Activated naive CD4-positive, alpha-beta T cell treated with anti-CD3 and anti-CD28 coated beads for 36 hours (primary cell): ENCODE measurements at regions of chr19 and their contacts with region 1.

Region 1: DNA sequence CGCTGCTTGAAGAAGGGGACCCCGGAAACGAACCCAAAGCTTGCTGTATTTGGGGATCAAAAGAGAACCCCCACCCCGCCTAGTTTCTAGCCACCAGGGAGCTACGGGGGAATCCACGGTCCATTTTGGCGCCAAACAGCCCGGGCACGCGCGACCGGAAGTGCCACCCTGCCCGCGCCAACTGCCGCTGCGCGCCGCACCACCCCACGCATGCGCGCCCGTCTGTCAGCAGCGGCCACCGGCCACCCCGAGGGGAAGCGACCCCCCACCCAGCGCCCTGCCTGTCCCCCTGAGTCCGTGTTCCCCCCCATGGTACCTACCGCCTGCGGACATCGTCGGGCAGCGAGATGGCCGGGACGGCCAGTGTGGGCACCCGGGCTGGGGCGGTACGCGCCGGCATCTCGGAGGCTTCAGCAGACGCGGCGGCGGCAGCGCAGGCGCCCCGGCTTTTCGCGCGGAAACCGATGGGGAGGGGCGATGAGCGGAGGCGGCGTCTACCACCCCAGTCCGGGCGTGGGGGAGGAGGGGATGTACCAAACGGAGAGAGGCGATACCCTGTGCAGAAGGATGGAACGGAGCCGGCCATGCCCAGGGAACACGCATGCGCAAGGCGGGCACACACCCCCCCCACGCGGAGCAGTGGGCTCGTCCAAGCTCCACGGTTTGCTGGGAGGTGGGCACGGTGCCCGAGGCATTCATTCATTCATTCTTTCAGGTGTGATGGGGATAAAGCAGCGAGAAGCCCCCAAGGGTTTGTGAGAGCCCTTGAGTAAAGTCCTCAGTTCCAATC is at the start of gene DNMT1:
- DNase-seq: peak; percentile 99
- H3K4me3 Mint-ChIP-seq: peak within 1 kb of the TSS; percentile 99
- H3K27ac Mint-ChIP-seq: peak within 1 kb of the TSS; percentile 98
- H3K4me1 Mint-ChIP-seq: peaks cover 46% of the 10 kb centered on the region
- H3K27me3 Mint-ChIP-seq: no peaks in the 10 kb centered on the region
- total RNA-seq, gene DNMT1: 365 to 371 TPM

Region 2: GRCh38 chr19:10085641-10086590 is 108.8 kb before region 1 on chr19 and contains the start of gene SHFL:
- CTCF ChIA-PET with region 1: no interaction called
- intact Hi-C with region 1: loop called (anchors 1 kb)
- DNase-seq: peak; percentile 80
- H3K4me3 Mint-ChIP-seq: peak within 1 kb of the TSS; percentile 80
- H3K27ac Mint-ChIP-seq: peak within 1 kb of the TSS; percentile 77
- H3K4me1 Mint-ChIP-seq: peaks cover 8% of the 10 kb centered on the region
- H3K27me3 Mint-ChIP-seq: no peaks in the 10 kb centered on the region
- total RNA-seq, gene SHFL: 28.3 to 31.9 TPM

Region 3: GRCh38 chr19:10142701-10143375 is 51.9 kb before region 1 on chr19:
- CTCF ChIA-PET with region 1: no interaction called
- intact Hi-C with region 1: loop called (anchors 2 kb)
- DNase-seq: peak; percentile 61
- H3K4me3 Mint-ChIP-seq: no peak overlapping the region
- H3K27ac Mint-ChIP-seq: peak overlapping the region; percentile 93
- H3K4me1 Mint-ChIP-seq: peaks cover 34% of the 10 kb centered on the region
- H3K27me3 Mint-ChIP-seq: no peaks in the 10 kb centered on the region

Region 4: GRCh38 chr19:10230861-10231611 is 36.3 kb after region 1 on chr19 and contains the start of gene S1PR2:
- CTCF ChIA-PET with region 1: interaction called, 4 read pairs
- intact Hi-C with region 1: loop called (anchors 2 kb)
- DNase-seq: peak; percentile 66
- H3K4me3 Mint-ChIP-seq: peak within 1 kb of the TSS; percentile 84
- H3K27ac Mint-ChIP-seq: peak within 1 kb of the TSS; percentile 72
- H3K4me1 Mint-ChIP-seq: peaks cover 24% of the 10 kb centered on the region
- H3K27me3 Mint-ChIP-seq: no peaks in the 10 kb centered on the region
- total RNA-seq, gene S1PR2: 3.4 TPM

Region 5: GRCh38 chr19:10332955-10333757 is 138.5 kb after region 1 on chr19 and contains the start of gene RAVER1:
- CTCF ChIA-PET with region 1: no interaction called
- intact Hi-C with region 1: loop called (anchors 10 kb)
- DNase-seq: peak; percentile 99
- H3K4me3 Mint-ChIP-seq: peak within 1 kb of the TSS; percentile 94
- H3K27ac Mint-ChIP-seq: peak within 1 kb of the TSS; percentile 96
- H3K4me1 Mint-ChIP-seq: peaks cover 36% of the 10 kb centered on the region
- H3K27me3 Mint-ChIP-seq: no peaks in the 10 kb centered on the region
- total RNA-seq, gene RAVER1: 63.0 to 69.0 TPM

Region 6: GRCh38 chr19:10380313-10381102 is 185.8 kb after region 1 on chr19 and contains the start of gene TYK2:
- CTCF ChIA-PET with region 1: no interaction called
- intact Hi-C with region 1: loop called (anchors 10 kb)
- DNase-seq: peak; percentile 97
- H3K4me3 Mint-ChIP-seq: peak within 1 kb of the TSS; percentile 87
- H3K27ac Mint-ChIP-seq: peak within 1 kb of the TSS; percentile 91
- H3K4me1 Mint-ChIP-seq: peaks cover 19% of the 10 kb centered on the region
- H3K27me3 Mint-ChIP-seq: no peaks in the 10 kb centered on the region
- total RNA-seq, gene TYK2: 175 to 190 TPM